ENCODE measurements at regions of chr1 and their contacts with region 1.

Region 1: DNA sequence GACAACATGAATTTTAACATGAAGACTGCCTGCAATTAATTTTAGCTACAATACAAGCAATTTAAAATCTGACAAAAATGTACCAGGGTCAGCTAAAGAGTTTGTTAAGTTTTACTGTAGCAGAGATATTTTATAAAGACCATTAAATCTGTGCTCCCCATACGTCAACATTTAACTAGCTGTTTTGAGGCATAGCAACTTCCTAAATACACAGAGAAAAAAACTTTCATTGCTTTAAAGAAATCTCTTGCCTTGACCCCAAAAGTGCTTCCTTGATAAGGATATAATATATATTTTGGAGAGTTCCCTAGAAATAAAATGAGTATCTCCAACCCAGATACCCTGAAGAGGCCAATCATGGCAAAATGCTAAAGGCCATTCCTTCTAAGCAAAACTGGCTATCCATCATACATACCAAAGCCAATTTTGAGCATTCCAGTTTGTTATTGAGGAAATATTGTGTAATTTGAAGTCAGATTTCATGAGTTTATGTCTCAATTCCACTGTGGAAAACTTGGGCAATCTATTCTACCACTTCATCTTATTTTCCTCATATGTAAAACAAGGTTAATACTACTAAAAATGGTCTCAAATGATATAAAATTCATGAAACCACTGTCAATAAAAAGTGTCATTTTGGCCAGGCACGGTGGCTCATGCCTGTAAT is 19.1 kb downstream of the ASPM start:
- DNase-seq: no peak
- H3K4me3 ChIP-seq: no peak overlapping the region
- H3K27ac ChIP-seq: no peak overlapping the region
- H3K4me1 ChIP-seq: peaks cover 1% of the 10 kb centered on the region
- H3K27me3 ChIP-seq: no peaks in the 10 kb centered on the region
- CTCF ChIP-seq: no peak
- EP300 ChIP-seq: no peak
- POLR2A ChIP-seq: no peak

Region 2: DNA sequence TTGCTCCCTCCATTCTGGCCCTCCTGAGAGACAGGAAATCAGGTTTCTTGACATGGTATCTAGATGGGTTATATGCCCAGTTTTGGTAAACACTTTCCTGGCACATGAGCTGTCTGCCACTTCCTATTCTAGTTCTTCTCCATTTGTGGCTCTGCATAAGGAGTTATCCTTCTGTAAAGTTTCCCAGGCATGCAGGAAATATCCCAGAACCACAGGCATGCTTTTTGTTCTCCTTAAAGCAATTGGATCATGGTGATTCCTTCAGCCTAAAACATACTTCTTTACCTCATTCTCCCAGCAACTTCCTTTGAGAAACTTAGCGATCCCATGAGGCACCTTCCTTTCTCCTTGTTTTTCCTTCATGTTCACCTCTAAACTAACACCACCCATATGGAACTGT is 340.5 kb after region 1 on chr1:
- intact Hi-C with region 1: loop called in 1 of 4 experiments (anchors 5 kb)
- DNase-seq: no peak
- H3K4me3 ChIP-seq: no peak overlapping the region
- H3K27ac ChIP-seq: no peak overlapping the region
- H3K4me1 ChIP-seq: peaks cover 18% of the 10 kb centered on the region
- H3K27me3 ChIP-seq: no peaks in the 10 kb centered on the region
- CTCF ChIP-seq: no peak
- EP300 ChIP-seq: no peak
- POLR2A ChIP-seq: no peak

Measured in ovary (tissue), 10 donors.